Activated B cell treated with CpG ODN at 0.5 μM for 24 hours (primary cell): ENCODE measurements at regions of chr11 and their contacts with region 1.

Region 1: GRCh38 chr11:62665075-62665598 is at the starts of genes C11orf98 and CSKMT:
- DNase-seq: peak; percentile 95
- ATAC-seq: peak; percentile 89
- H3K4me3 Mint-ChIP-seq: peak within 1 kb of the TSS; percentile 97
- H3K27ac Mint-ChIP-seq: peak within 1 kb of the TSS; percentile 88
- H3K4me1 Mint-ChIP-seq: peaks cover 45% of the 10 kb centered on the region
- H3K27me3 Mint-ChIP-seq: no peaks in the 10 kb centered on the region
- CTCF ChIP-seq: no peak
- total RNA-seq, gene C11orf98: 107 and 120 TPM in 2 replicates
- total RNA-seq, gene CSKMT: 50.5 and 52.1 TPM in 2 replicates

Region 2: DNA sequence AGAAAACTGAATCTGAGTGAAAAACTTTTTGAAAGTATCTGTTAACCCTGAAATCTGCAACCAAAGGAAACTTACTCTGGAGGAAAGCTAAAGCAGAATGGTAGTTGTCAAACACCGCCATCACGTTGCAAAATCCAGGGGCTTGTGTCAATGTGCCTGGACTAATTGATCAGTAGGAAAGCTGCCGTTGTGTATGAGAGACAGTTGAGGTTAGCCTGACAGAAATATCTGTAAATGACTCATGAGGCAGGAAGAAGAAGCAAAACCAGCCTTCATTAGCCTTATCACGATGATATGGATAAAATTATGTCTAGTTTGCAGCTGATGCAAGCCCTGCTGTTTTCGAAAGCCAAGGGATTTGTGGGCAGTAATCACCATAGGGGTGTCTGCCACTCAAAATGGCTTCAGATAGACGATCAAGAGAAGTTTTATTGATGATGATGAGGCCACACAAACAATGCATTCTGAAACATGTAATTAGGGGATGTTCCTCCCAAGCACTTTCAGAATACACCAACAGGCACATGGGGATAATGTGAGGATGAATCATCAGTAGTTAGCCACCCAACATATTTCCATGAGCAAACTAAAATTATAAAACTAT is 237.4 kb before region 1 on chr11:
- CTCF ChIA-PET with region 1: interaction called, 11 read pairs
- POLR2A ChIA-PET with region 1: interaction called, 6 read pairs
- intact Hi-C with region 1: no loop called
- DNase-seq: no peak
- ATAC-seq: peak; percentile 23
- H3K4me3 Mint-ChIP-seq: peak overlapping the region; percentile 25
- H3K27ac Mint-ChIP-seq: peak overlapping the region; percentile 57
- H3K4me1 Mint-ChIP-seq: peaks cover 24% of the 10 kb centered on the region
- H3K27me3 Mint-ChIP-seq: peaks cover 2% of the 10 kb centered on the region
- CTCF ChIP-seq: no peak

Region 3: DNA sequence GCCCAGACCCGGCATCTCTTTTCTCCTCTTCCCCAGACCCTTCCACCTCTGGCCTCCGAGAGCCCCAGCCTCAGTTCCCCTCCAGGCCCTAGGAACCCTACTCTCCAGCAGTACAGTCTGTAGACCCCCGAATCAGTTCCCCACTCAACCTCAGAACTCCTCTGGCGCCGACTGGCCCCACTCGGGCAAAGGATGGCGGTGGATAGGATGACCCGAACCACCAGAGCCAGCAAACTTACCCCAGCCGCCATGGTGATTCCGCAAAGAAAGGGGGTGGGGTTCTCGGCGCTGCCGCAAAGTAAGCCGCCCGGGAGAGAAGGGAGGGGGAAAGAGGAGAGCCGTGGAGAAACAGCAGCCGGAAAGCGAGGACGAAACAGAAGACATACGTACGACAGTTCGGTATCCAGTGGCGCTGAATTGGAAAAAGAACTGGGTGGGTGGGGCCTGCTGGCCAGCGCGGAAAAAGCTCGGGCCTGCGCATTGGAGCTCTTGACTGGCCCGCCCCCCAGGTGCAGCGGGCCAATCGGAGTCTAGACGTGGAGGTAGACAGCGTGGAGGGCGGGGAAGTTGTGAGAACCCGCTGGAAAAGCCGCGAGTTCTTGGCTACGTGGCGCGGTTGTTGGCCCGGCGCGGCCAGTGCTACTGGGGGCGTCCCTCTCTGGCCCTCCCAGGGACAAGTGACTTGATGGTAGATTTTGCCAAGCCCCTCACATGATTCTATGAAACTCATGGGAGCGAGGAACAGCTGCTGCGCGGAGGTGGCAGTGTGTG is 91.4 kb before region 1 on chr11 and contains the start of gene EEF1G:
- CTCF ChIA-PET with region 1: no interaction called
- POLR2A ChIA-PET with region 1: interaction called, 12 read pairs
- intact Hi-C with region 1: no loop called
- DNase-seq: peak; percentile 92
- ATAC-seq: peak; percentile 94
- H3K4me3 Mint-ChIP-seq: peak within 1 kb of the TSS; percentile 97
- H3K27ac Mint-ChIP-seq: peak within 1 kb of the TSS; percentile 94
- H3K4me1 Mint-ChIP-seq: peaks cover 51% of the 10 kb centered on the region
- H3K27me3 Mint-ChIP-seq: no peaks in the 10 kb centered on the region
- CTCF ChIP-seq: no peak
- total RNA-seq, gene EEF1G: 2,373 and 2,524 TPM in 2 replicates

Region 4: GRCh38 chr11:62621567-62622470 is 43.3 kb before region 1 on chr11 and contains the start of gene B3GAT3:
- CTCF ChIA-PET with region 1: no interaction called
- POLR2A ChIA-PET with region 1: interaction called, 75 read pairs
- intact Hi-C with region 1: loop called (anchors 1 kb)
- DNase-seq: peak; percentile 93
- ATAC-seq: peak; percentile 92
- H3K4me3 Mint-ChIP-seq: peak within 1 kb of the TSS; percentile 90
- H3K27ac Mint-ChIP-seq: peak within 1 kb of the TSS; percentile 93
- H3K4me1 Mint-ChIP-seq: peaks cover 19% of the 10 kb centered on the region
- H3K27me3 Mint-ChIP-seq: no peaks in the 10 kb centered on the region
- CTCF ChIP-seq: no peak
- total RNA-seq, gene B3GAT3: 48.8 and 56.6 TPM in 2 replicates

Region 5: GRCh38 chr11:62678770-62679696 is 13.9 kb after region 1 on chr11 and contains the start of gene UBXN1:
- CTCF ChIA-PET with region 1: interaction called, 3 read pairs
- POLR2A ChIA-PET with region 1: interaction called, 175 read pairs
- intact Hi-C with region 1: loop called (anchors 1 kb)
- DNase-seq: peak; percentile 77
- ATAC-seq: peak; percentile 74
- H3K4me3 Mint-ChIP-seq: peak within 1 kb of the TSS; percentile 91
- H3K27ac Mint-ChIP-seq: peak within 1 kb of the TSS; percentile 96
- H3K4me1 Mint-ChIP-seq: peaks cover 41% of the 10 kb centered on the region
- H3K27me3 Mint-ChIP-seq: no peaks in the 10 kb centered on the region
- CTCF ChIP-seq: no peak
- total RNA-seq, gene UBXN1: 204 and 205 TPM in 2 replicates

Region 6: GRCh38 chr11:62771144-62772021 is 106.2 kb after region 1 on chr11 and contains the start of gene TAF6L:
- CTCF ChIA-PET with region 1: no interaction called
- POLR2A ChIA-PET with region 1: interaction called, 18 read pairs
- intact Hi-C with region 1: no loop called
- DNase-seq: peak; percentile 81
- ATAC-seq: peak; percentile 88
- H3K4me3 Mint-ChIP-seq: peak within 1 kb of the TSS; percentile 92
- H3K27ac Mint-ChIP-seq: peak within 1 kb of the TSS; percentile 94
- H3K4me1 Mint-ChIP-seq: peaks cover 28% of the 10 kb centered on the region
- H3K27me3 Mint-ChIP-seq: no peaks in the 10 kb centered on the region
- CTCF ChIP-seq: no peak
- total RNA-seq, gene TAF6L: 32.9 and 38.6 TPM in 2 replicates

Region 7: GRCh38 chr11:62855571-62856332 is 190.6 kb after region 1 on chr11:
- CTCF ChIA-PET with region 1: interaction called, 3 read pairs
- POLR2A ChIA-PET with region 1: interaction called, 36 read pairs
- intact Hi-C with region 1: no loop called
- DNase-seq: peak; percentile 99
- ATAC-seq: peak; percentile 89
- H3K4me3 Mint-ChIP-seq: peak overlapping the region; percentile 99
- H3K27ac Mint-ChIP-seq: peak overlapping the region; percentile 96
- H3K4me1 Mint-ChIP-seq: peaks cover 61% of the 10 kb centered on the region
- H3K27me3 Mint-ChIP-seq: no peaks in the 10 kb centered on the region
- CTCF ChIP-seq: no peak